ENCODE measurements at regions of chr7 and their contacts with region 1.

Region 1: GRCh38 chr7:36291387-36292316 is 98.0 kb upstream of the ANLN start:
- DNase-seq: peak; percentile 81
- ATAC-seq: peak; percentile 61
- H3K4me3 ChIP-seq: peak overlapping the region in 1 of 5 experiments; percentile 5
- H3K4me3 Mint-ChIP-seq: peak overlapping the region; percentile 36
- H3K27ac ChIP-seq: no peak overlapping the region
- H3K27ac Mint-ChIP-seq: no peak overlapping the region
- H3K4me1 ChIP-seq: peaks cover 27 to 31% of the 10 kb centered on the region in 2 donors
- H3K4me1 Mint-ChIP-seq: peaks cover 30% of the 10 kb centered on the region
- H3K27me3 ChIP-seq: peaks cover 0 to 10% (median 3%) of the 10 kb centered on the region in 4 experiments
- H3K27me3 Mint-ChIP-seq: peaks cover 12% of the 10 kb centered on the region
- CTCF ChIP-seq: peak; percentile 99

Region 2: DNA sequence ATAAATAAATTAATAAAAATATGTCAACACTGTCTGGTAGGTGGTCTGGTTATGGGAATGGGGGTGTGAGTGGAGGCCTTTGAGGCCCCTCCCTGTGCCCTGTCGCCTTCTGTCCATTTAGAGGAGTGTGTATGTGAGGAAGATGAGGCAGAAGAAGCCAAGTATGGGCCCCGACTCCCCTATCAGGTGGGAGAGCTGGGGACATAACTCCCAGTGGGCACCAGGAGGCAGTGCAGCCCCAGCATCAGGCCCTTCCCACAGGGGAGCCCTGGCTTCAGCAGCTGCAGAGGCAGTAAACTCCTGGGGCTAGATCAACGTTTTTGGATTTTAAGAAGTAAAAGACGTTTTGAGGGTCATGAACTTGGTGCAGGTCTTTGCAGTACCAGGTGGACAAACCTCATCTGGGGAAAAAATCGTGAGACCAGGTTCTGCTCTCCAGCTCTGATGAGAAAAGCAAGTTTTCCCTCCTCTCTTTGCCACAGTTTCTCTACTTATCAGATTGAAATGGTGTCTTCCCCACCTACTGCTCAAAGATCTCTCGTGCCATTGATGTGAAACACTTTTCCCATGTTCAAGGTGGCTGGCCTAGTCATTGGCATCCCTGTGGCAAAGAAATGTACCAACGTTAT is 306.4 kb before region 1 on chr7:
- CTCF ChIA-PET with region 1: interaction called, 197 read pairs
- POLR2A ChIA-PET with region 1: no interaction called
- intact Hi-C with region 1: no loop called
- DNase-seq: peak; percentile 77
- ATAC-seq: peak; percentile 98
- H3K4me3 ChIP-seq: no peak overlapping the region
- H3K4me3 Mint-ChIP-seq: no peak overlapping the region
- H3K27ac ChIP-seq: no peak overlapping the region
- H3K27ac Mint-ChIP-seq: no peak overlapping the region
- H3K4me1 ChIP-seq: no peaks in the 10 kb centered on the region
- H3K4me1 Mint-ChIP-seq: no peaks in the 10 kb centered on the region
- H3K27me3 ChIP-seq: no peaks in the 10 kb centered on the region
- H3K27me3 Mint-ChIP-seq: peaks cover 7% of the 10 kb centered on the region
- CTCF ChIP-seq: peak; percentile 87

Region 3: GRCh38 chr7:35995334-35995733 is 296.3 kb before region 1 on chr7:
- CTCF ChIA-PET with region 1: interaction called, 10 read pairs
- POLR2A ChIA-PET with region 1: no interaction called
- intact Hi-C with region 1: no loop called
- DNase-seq: no peak
- ATAC-seq: no peak
- H3K4me3 ChIP-seq: no peak overlapping the region
- H3K4me3 Mint-ChIP-seq: no peak overlapping the region
- H3K27ac ChIP-seq: no peak overlapping the region
- H3K27ac Mint-ChIP-seq: no peak overlapping the region
- H3K4me1 ChIP-seq: no peaks in the 10 kb centered on the region
- H3K4me1 Mint-ChIP-seq: no peaks in the 10 kb centered on the region
- H3K27me3 ChIP-seq: peaks cover 0 to 4% (median 0%) of the 10 kb centered on the region in 4 experiments
- H3K27me3 Mint-ChIP-seq: peaks cover 3% of the 10 kb centered on the region
- CTCF ChIP-seq: no peak

Region 4: GRCh38 chr7:36236073-36236472 is 55.6 kb before region 1 on chr7:
- CTCF ChIA-PET with region 1: no interaction called
- POLR2A ChIA-PET with region 1: no interaction called
- intact Hi-C with region 1: no loop called
- DNase-seq: no peak
- ATAC-seq: no peak
- H3K4me3 ChIP-seq: no peak overlapping the region
- H3K4me3 Mint-ChIP-seq: no peak overlapping the region
- H3K27ac ChIP-seq: no peak overlapping the region
- H3K27ac Mint-ChIP-seq: no peak overlapping the region
- H3K4me1 ChIP-seq: no peaks in the 10 kb centered on the region
- H3K4me1 Mint-ChIP-seq: no peaks in the 10 kb centered on the region
- H3K27me3 ChIP-seq: no peaks in the 10 kb centered on the region
- H3K27me3 Mint-ChIP-seq: no peaks in the 10 kb centered on the region
- CTCF ChIP-seq: no peak

Region 5: DNA sequence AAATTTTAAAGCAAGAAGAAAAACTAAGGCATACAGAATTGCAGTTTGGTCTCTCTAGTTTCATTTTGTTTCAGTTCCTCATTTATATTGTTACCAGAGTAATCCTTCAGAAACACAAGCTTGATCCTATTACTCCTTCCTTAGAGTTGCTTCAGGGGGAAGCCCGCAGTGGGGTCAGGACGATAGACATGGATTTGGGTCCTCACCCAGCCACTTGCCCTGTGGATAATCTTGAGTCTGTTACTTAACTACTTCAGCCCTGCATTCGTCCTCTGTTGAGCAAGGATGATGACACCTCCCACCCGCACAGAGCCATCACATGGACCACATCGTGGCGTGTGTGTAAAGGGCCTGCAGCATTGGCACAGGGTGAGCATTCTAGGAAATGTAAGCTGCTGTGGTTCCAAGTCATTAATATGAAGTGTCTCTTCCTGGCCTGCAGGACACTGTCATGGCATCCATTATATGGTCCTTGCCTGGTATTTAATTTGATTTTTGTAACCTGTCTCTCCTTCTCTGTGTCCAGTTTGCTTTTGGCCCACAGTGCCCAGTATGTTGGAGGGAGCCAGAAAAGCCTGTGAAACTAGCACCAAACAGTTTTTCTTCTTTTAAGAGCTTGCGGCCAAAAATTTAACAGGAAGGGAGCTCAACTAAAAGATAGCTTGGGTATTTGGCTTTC is 27.4 kb before region 1 on chr7:
- CTCF ChIA-PET with region 1: interaction called, 10 read pairs
- POLR2A ChIA-PET with region 1: no interaction called
- intact Hi-C with region 1: no loop called
- DNase-seq: peak; percentile 37
- ATAC-seq: peak; percentile 47
- H3K4me3 ChIP-seq: no peak overlapping the region
- H3K4me3 Mint-ChIP-seq: peak overlapping the region; percentile 43
- H3K27ac ChIP-seq: no peak overlapping the region
- H3K27ac Mint-ChIP-seq: no peak overlapping the region
- H3K4me1 ChIP-seq: peaks cover 13 to 20% of the 10 kb centered on the region in 2 donors
- H3K4me1 Mint-ChIP-seq: peaks cover 24% of the 10 kb centered on the region
- H3K27me3 ChIP-seq: no peaks in the 10 kb centered on the region
- H3K27me3 Mint-ChIP-seq: peaks cover under 1% of the 10 kb centered on the region
- CTCF ChIP-seq: no peak

Region 6: GRCh38 chr7:36690514-36691187 is 399.0 kb after region 1 on chr7:
- CTCF ChIA-PET with region 1: no interaction called
- POLR2A ChIA-PET with region 1: no interaction called
- intact Hi-C with region 1: no loop called
- DNase-seq: no peak
- ATAC-seq: no peak
- H3K4me3 ChIP-seq: no peak overlapping the region
- H3K4me3 Mint-ChIP-seq: no peak overlapping the region
- H3K27ac ChIP-seq: no peak overlapping the region
- H3K27ac Mint-ChIP-seq: no peak overlapping the region
- H3K4me1 ChIP-seq: peaks cover 0 to 7% of the 10 kb centered on the region in 2 donors
- H3K4me1 Mint-ChIP-seq: peaks cover 15% of the 10 kb centered on the region
- H3K27me3 ChIP-seq: no peaks in the 10 kb centered on the region
- H3K27me3 Mint-ChIP-seq: no peaks in the 10 kb centered on the region
- CTCF ChIP-seq: no peak

Measured in B cell (primary cell).